Activated T-helper 1 cell treated with anti-CD3 and anti-CD28 coated beads, Interleukin-12 subunit alpha, Interleukin-12 subunit beta, Interleukin-2, Interleukin-4 antibody, amounts not matched to agents 30 ng/mL and 10 ng/mL and 1 ng/mL, durations not matched to agents 14 hours and 24 hours and 36 hours (primary cell): ENCODE measurements at regions of chr2 and their contacts with region 1.

Region 1: GRCh38 chr2:160224060-160224459 is 24.0 kb upstream of the ITGB6 start:
- DNase-seq: peak; percentile 23
- H3K4me3 Mint-ChIP-seq: peak overlapping the region; percentile 39
- H3K27ac Mint-ChIP-seq: peak overlapping the region; percentile 32
- H3K4me1 Mint-ChIP-seq: peaks cover 56% of the 10 kb centered on the region
- H3K27me3 Mint-ChIP-seq: peaks cover 5% of the 10 kb centered on the region

Region 2: DNA sequence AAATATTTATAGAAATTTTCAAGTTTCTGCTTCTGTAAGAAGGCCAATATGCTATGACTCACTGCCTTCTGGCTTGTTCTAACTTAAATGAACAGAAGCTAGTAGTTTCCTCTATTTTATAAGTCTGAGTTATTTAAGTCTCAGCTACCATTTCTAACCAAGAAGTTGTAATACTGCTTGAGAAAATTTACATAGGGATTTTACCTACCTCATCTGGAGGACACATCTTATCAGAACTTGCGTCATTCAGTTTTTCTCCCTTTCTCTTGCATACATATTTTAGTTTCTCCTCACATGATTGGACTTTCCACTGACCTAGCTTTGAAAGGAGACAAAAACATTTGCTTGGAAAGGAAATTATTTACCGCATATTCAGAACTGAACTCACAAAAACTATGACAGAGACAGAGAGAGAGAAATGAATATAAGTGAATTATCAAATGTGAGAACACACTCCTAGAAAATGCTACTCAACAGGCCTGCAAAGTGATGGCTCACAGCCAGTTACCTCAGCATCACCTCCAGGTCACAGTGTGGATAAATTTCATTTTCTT is 344.9 kb before region 1 on chr2:
- intact Hi-C with region 1: loop called (anchors 5 kb)
- DNase-seq: no peak
- H3K4me3 Mint-ChIP-seq: no peak overlapping the region
- H3K27ac Mint-ChIP-seq: peak overlapping the region; percentile 86
- H3K4me1 Mint-ChIP-seq: peaks cover 32% of the 10 kb centered on the region
- H3K27me3 Mint-ChIP-seq: no peaks in the 10 kb centered on the region

Region 3: GRCh38 chr2:160269803-160270570 is 45.9 kb after region 1 on chr2:
- intact Hi-C with region 1: loop called (anchors 1 kb)
- DNase-seq: peak; percentile 25
- H3K4me3 Mint-ChIP-seq: peak overlapping the region; percentile 62
- H3K27ac Mint-ChIP-seq: no peak overlapping the region
- H3K4me1 Mint-ChIP-seq: peaks cover 33% of the 10 kb centered on the region
- H3K27me3 Mint-ChIP-seq: peaks cover 16% of the 10 kb centered on the region

Region 4: DNA sequence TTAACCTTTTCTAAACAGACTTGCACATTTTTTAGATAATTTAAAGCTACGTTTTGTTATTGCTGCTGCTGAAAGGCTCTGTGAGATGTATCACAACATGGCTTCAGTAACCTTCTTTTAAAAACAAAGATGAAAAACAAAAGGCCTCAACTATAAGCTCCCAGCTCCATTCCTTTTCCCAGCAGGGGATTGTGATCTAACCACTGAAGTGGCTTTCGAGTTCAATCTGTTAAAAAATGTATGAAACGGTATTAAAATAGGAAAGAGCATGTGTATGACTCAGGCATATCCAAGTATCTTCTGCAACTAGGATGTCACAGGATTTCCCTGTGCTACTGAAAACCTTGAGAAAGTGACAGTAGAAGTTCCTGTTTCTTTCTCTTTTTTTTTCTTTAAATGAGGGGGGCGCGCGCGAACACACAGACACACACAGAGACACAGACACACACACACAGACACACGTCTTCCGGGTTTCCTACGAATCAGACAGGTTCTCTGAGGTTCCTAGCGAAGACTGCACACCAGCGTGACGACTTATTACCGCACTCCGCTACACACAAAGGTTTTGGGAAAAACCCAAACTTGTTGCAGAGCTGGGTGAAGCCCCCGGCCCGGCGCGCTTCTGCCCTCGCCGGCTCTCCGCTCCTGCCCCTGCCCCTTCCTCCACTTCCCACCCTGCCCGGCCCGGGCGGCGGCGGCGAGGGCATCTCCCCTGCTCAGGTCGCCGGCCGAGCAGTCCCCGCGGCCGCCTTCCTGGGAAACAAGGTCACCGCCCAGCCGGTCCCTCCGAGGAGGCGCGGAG is 182.7 kb after region 1 on chr2:
- intact Hi-C with region 1: loop called (anchors 2 kb)
- DNase-seq: peak; percentile 66
- H3K4me3 Mint-ChIP-seq: peak overlapping the region; percentile 90
- H3K27ac Mint-ChIP-seq: peak overlapping the region; percentile 92
- H3K4me1 Mint-ChIP-seq: peaks cover 83% of the 10 kb centered on the region
- H3K27me3 Mint-ChIP-seq: no peaks in the 10 kb centered on the region

Region 5: DNA sequence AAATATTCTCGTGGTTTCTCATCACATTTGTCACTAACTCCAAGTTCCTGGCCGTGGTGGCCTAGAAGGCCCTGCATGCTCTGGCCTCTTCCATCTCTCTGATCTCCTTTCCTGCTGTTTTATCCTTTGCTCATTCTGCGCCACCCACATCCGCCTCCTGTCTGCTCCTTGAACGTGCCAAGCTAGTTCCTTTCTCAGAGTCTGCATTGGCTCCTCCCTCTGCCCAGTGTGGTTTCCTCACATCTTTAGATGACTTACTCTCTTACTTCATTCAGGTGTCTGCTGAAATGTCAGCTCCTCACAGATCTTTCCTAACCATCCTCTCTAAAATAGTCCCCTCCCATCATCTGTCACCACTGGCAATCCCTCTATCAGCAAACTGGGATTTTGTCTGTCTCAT is 428.2 kb after region 1 on chr2:
- intact Hi-C with region 1: loop called (anchors 5 kb)
- DNase-seq: peak; percentile 48
- H3K4me3 Mint-ChIP-seq: peak overlapping the region; percentile 4
- H3K27ac Mint-ChIP-seq: peak overlapping the region; percentile 27
- H3K4me1 Mint-ChIP-seq: peaks cover 20% of the 10 kb centered on the region
- H3K27me3 Mint-ChIP-seq: peaks cover 4% of the 10 kb centered on the region

Region 6: DNA sequence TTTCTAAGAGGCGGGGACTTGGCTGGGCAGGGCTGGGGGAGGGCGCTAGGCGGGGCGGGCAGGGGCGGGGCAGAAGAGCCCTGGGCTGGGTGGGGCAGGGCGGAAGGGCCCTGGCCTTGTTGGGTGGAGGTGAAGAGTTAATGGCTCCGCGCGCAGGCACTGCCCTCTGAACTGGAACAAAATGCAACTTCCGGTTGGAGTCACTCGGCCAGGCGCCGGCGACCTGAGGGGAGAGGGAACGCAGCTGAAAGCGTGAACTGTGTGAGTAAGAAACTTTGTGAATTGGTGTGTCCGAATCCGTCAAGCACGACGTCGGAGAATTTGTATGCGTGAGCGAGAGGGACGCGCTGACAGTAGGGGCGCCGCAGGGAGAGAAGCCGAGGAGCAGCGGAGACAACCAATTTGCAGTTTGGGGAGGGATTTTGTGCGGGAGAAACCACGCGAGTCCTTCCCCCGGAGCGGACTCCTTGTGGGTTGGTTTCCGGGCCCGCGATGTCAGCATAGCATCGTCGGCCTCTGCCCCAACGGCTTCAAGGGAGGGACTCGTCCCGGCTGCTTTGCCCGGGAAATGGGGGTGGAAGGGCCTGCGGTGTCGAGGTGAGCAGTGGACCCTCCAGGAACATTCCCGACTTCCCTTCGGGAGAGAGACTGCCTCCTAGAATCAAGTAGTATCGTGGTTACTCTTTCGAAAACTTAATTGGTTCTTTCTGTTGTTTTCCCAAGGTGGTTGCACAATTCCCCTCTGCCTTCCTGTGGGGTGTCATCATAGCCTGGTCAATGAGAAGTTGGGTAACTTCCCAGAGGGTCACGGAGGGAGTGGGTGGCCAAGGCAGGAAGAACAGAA is 936.4 kb after region 1 on chr2 and contains the start of gene TANK:
- intact Hi-C with region 1: loop called (anchors 10 kb)
- DNase-seq: peak; percentile 88
- H3K4me3 Mint-ChIP-seq: peak within 1 kb of the TSS; percentile 97
- H3K27ac Mint-ChIP-seq: peak within 1 kb of the TSS; percentile 99
- H3K4me1 Mint-ChIP-seq: peaks cover 81% of the 10 kb centered on the region
- H3K27me3 Mint-ChIP-seq: no peaks in the 10 kb centered on the region
- total RNA-seq, gene TANK: 136 and 141 TPM in 2 replicates